ENCODE measurements at regions of chr19 and their contacts with region 1.

Region 1: GRCh38 chr19:43519436-43520088 is 7.4 kb downstream of the ETHE1 start:
- DNase-seq: peak; percentile 65 to 85 (median 74)
- H3K4me3 ChIP-seq: no peak overlapping the region
- H3K4me3 Mint-ChIP-seq: no peak overlapping the region
- H3K27ac ChIP-seq: no peak overlapping the region
- H3K27ac Mint-ChIP-seq: peak overlapping the region; percentile 1 to 94 (median 26)
- H3K4me1 ChIP-seq: peaks cover 4% of the 10 kb centered on the region
- H3K4me1 Mint-ChIP-seq: peaks cover 11 to 17% (median 16%) of the 10 kb centered on the region in 3 donors
- H3K27me3 ChIP-seq: no peaks in the 10 kb centered on the region
- H3K27me3 Mint-ChIP-seq: no peaks in the 10 kb centered on the region

Region 2: DNA sequence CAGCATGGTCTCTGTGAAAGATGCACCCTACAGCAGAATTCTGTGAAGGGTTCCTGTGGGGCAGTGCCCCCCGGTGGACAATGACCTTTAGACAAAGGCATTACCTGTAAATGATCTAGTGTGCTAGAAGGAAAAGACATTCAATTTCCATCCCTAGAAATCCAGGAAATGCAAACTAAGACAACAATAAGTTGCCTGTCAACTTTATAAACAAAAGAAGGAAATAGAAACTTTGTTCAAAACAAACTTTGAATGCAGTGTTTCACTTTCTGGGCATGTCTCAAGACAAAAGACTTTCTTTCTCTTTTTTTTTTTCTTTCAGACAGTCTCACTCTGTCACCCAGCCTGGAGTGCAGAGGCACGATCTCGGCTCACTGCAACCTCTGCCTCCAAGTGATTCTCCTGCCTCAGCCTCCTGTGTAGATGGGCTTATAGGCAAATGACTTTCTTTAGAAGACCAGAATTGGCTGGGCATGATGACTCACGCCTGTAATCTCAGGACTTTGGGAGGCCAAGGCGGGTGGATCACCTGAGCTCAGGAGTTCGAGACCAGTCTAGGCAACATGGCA is 89.3 kb before region 1 on chr19:
- CTCF ChIA-PET with region 1: interaction called, 52 read pairs
- POLR2A ChIA-PET with region 1: no interaction called
- DNase-seq: peak in 1 of 5 donors; percentile 12
- H3K4me3 ChIP-seq: no peak overlapping the region
- H3K4me3 Mint-ChIP-seq: peak overlapping the region in 1 of 7 donors; percentile 74
- H3K27ac ChIP-seq: no peak overlapping the region
- H3K27ac Mint-ChIP-seq: peak overlapping the region in 2 of 8 donors; percentile 86 to 91
- H3K4me1 ChIP-seq: peaks cover 9% of the 10 kb centered on the region
- H3K4me1 Mint-ChIP-seq: peaks cover 10 to 27% (median 20%) of the 10 kb centered on the region in 3 donors
- H3K27me3 ChIP-seq: no peaks in the 10 kb centered on the region
- H3K27me3 Mint-ChIP-seq: no peaks in the 10 kb centered on the region

Region 3: DNA sequence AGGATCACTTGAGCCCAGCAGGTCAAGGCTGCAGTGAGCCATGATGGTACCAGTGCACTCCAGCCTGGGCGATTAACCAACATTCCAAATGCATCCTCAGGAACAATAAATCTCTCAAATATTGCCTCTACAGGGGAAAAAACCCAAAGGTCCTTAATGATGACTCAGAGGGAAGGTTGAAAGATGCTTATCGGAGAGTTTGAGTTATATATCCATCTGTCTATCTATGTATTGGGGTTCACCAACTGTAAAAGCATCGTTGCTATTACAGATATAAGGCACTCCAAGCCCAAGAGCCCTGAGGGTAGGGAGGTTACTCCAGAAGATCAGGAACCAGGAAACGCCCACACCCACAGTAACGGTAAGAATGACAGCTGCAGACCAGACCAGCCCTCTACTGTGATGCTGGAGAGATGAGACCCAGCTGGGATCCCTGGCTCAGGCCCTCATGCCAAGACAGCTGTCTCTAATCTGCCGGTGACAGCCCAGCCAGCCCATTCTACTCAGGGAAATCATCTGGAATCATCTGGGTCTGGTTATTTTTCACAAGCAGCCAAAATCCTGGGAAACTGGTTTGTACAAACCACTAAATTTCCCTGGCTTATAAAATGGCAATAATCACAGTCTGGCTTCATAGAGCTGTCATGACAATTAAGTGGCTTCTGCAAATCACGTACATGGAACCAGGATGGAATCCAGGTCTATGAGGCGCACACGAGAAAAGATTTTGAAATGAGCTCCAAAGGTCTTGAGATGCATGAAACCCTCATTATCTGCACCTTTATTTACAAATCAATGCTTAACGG is 81.1 kb before region 1 on chr19:
- CTCF ChIA-PET with region 1: interaction called, 316 read pairs
- POLR2A ChIA-PET with region 1: interaction called, 11 read pairs
- DNase-seq: no peak
- H3K4me3 ChIP-seq: peak overlapping the region; percentile 68
- H3K4me3 Mint-ChIP-seq: peak overlapping the region in 6 of 7 donors; percentile 13 to 74 (median 64)
- H3K27ac ChIP-seq: peak overlapping the region; percentile 87
- H3K27ac Mint-ChIP-seq: peak overlapping the region; percentile 77 to 96 (median 94)
- H3K4me1 ChIP-seq: peaks cover 39% of the 10 kb centered on the region
- H3K4me1 Mint-ChIP-seq: peaks cover 44 to 58% (median 55%) of the 10 kb centered on the region in 3 donors
- H3K27me3 ChIP-seq: no peaks in the 10 kb centered on the region
- H3K27me3 Mint-ChIP-seq: no peaks in the 10 kb centered on the region